ENCODE measurements at regions of chr2 and their contacts with region 1.

Region 1: DNA sequence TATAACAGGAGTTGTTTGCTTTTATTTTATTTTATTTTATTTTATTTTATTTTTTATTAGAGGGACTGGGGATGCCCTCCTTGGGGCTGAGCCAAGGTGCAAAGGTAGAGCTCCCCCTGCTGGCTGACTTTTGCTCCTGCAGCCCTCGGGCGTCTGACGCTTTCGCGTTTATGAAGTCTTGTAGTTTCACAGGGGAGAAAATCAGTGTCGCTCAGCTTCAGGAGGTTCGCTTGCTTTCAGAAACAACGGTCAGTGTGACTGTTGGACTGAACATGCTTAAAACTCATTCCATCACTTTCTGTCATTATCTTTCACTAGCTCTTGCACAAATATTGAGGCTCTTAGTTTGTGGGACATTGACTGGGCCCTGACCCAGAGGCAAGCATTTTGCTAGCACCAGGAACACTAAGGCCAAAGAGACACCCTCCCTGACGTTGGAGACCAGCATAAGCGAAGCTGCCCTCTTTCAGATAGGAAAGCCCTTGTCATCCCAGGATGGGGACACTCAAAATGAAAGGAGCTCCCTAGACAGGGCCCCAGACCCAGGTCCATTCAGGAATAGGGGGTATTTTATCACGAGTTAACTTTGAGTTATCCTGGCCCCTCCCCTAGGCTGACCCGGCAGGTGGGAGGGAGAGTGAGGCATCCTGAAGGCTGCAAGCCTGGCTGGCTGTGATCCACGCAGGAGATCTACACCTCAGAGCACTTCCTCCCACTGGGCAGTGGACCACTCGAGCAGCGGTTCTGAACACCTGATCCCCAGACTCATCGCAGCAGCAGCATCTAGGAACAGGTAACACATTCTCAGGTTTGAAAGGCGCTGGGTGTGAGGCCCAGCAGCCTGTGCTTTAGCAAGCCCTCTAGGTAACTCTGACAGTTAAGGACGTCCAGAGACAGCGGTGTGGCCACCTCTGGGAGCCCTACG is 34.4 kb downstream of the LGALSL start:
- DNase-seq: peak; percentile 12
- ATAC-seq: peak; percentile 94
- H3K4me3 ChIP-seq: no peak overlapping the region
- H3K27ac ChIP-seq: no peak overlapping the region
- H3K4me1 ChIP-seq: peaks cover 5% of the 10 kb centered on the region
- H3K27me3 ChIP-seq: no peaks in the 10 kb centered on the region
- CTCF ChIP-seq: peak; percentile 84 to 92 (median 91)
- EP300 ChIP-seq: no peak
- POLR2A ChIP-seq: no peak
- RAD21 ChIP-seq: peak; percentile 90

Region 2: DNA sequence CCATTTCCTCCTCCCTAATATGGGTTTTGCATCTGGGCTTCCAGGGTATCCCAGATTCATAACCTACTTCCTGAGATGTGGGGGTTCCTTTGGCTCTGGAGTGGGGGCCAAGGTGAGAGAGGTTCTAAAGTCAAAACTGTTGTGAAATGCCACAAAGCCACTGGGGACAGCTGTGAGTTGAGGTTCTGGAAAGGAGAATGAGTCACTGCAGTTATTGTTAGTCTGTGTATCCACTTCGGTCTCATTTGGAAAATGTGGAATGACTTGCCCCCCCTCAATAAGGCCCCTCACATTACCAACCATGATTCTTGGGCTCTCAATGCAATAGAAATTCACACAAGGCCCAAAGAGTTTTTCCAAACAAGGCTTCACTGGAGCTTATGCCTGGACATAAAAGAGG is 85.4 kb before region 1 on chr2:
- CTCF ChIA-PET with region 1: interaction called, 11 read pairs
- POLR2A ChIA-PET with region 1: no interaction called
- RAD21 ChIA-PET with region 1: interaction called, 3 read pairs
- SMC1A ChIA-PET with region 1: no interaction called
- in situ Hi-C with region 1: no loop called
- intact Hi-C with region 1: no loop called
- DNase-seq: no peak
- ATAC-seq: no peak
- H3K4me3 ChIP-seq: no peak overlapping the region
- H3K27ac ChIP-seq: no peak overlapping the region
- H3K4me1 ChIP-seq: peaks cover 9% of the 10 kb centered on the region; the same call in 1 of the 2 replicates
- H3K27me3 ChIP-seq: no peaks in the 10 kb centered on the region
- CTCF ChIP-seq: no peak
- EP300 ChIP-seq: no peak
- POLR2A ChIP-seq: no peak
- RAD21 ChIP-seq: no peak

Region 3: GRCh38 chr2:64463781-64464180 is 24.5 kb before region 1 on chr2:
- CTCF ChIA-PET with region 1: interaction called, 31 read pairs
- POLR2A ChIA-PET with region 1: interaction called, 3 read pairs
- RAD21 ChIA-PET with region 1: interaction called, 9 read pairs
- SMC1A ChIA-PET with region 1: interaction called, 21 read pairs
- in situ Hi-C with region 1: no loop called
- intact Hi-C with region 1: no loop called
- DNase-seq: no peak
- ATAC-seq: no peak
- H3K4me3 ChIP-seq: no peak overlapping the region
- H3K27ac ChIP-seq: no peak overlapping the region
- H3K4me1 ChIP-seq: no peaks in the 10 kb centered on the region
- H3K27me3 ChIP-seq: no peaks in the 10 kb centered on the region
- CTCF ChIP-seq: no peak
- EP300 ChIP-seq: no peak
- POLR2A ChIP-seq: no peak
- RAD21 ChIP-seq: no peak

Region 4: DNA sequence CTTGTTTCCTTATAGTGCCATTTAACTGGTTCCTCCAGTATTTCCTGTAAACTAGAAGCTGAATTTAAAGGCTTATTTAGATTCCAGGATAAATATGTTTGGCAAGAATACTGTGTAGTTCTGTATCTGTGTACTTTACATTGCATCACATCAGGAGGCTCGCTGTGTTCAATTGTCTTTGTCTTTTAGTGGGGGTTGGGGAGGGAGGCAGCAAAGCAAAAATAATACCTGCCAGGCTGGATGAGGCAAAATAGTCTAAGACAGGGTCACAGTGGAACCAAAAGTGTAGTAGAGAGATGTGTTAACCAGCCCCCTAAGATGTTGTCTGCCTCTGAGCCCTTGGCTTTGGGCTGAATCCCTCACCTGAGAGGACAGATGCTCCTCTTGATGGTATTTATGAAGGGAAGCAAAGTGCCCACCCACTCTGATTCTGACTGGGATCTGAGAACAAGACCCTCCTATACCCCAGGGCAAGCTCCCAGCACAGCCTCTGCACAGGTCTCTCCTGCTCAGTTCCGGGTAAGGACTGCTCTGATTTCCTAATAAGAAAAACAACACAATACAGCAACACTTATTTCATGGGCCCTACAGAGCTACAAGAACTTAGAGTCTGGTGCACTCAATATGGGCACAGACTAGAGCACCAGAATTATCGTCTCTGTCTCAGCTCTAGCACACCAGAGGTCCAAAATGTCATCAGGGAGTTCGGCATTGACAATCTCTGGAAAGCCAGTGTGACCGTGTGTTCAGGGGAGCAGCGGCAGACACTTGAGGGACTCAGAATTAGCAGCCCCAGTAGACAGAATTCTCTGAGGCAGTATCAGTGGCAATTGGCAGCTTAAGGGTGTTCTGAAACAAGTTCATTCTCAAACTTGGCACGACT is 28.6 kb after region 1 on chr2:
- CTCF ChIA-PET with region 1: interaction called, 10 read pairs
- POLR2A ChIA-PET with region 1: no interaction called
- RAD21 ChIA-PET with region 1: no interaction called
- SMC1A ChIA-PET with region 1: interaction called, 7 read pairs
- in situ Hi-C with region 1: no loop called
- intact Hi-C with region 1: no loop called
- DNase-seq: no peak
- ATAC-seq: no peak
- H3K4me3 ChIP-seq: no peak overlapping the region
- H3K27ac ChIP-seq: no peak overlapping the region
- H3K4me1 ChIP-seq: no peaks in the 10 kb centered on the region
- H3K27me3 ChIP-seq: peaks cover 0 to 6% of the 10 kb centered on the region in 2 experiments; a peak in 1 of 4 replicates
- CTCF ChIP-seq: no peak
- EP300 ChIP-seq: no peak
- POLR2A ChIP-seq: no peak
- RAD21 ChIP-seq: no peak